A549 (cell line): ENCODE measurements at regions of chr17 and their contacts with region 1.

Region 1: GRCh38 chr17:1153795-1154546 is 25.8 kb downstream of the ABR start:
- DNase-seq: peak; percentile 51 to 55
- ATAC-seq: peak; percentile 66 to 67
- H3K4me3 ChIP-seq: no peak overlapping the region
- H3K27ac ChIP-seq: peak overlapping the region in 1 of 2 experiments; percentile 71; a peak in 3 of 6 replicates
- H3K4me1 ChIP-seq: no peaks in the 10 kb centered on the region
- CTCF ChIP-seq: no peak
- EP300 ChIP-seq: no peak
- POLR2A ChIP-seq: no peak
- RAD21 ChIP-seq: no peak

Region 2: DNA sequence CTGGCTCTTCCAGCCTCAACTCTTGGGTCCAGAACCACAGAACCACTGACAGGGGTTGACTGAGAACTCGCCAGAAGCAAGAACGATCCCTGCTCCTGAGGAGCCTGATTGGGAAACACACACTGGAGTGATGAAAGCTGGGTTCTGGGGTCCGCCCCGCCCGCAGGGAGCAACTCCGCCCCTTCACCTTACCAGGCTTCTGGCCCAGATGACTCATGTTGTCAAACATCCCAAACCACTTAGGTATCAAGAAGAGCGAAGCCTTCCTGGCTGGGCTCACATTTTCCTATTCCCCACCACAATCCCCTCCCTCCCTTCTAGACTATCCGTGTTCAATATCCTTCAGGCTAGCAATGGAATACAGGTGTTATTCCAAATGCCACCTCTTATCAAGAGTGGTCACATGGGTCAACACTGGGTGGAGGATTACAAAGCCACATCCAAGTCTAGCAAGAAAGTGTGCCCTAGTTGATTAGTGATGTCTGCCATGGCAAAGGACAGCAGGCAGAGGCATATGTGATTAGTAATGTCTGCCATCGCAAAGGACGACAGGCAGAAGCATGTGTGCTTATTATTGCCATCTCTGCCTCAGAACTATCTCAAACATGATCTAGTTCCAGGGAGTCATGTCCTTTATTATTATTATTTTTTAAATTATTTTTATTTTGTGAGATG is 86.6 kb before region 1 on chr17:
- CTCF ChIA-PET with region 1: no interaction called
- POLR2A ChIA-PET with region 1: no interaction called
- DNase-seq: peak; percentile 39 to 50
- ATAC-seq: peak; percentile 44 to 48; a peak in 3 of 6 replicates
- H3K4me3 ChIP-seq: no peak overlapping the region
- H3K27ac ChIP-seq: no peak overlapping the region
- H3K4me1 ChIP-seq: peaks cover 9% of the 10 kb centered on the region
- CTCF ChIP-seq: no peak
- EP300 ChIP-seq: no peak
- POLR2A ChIP-seq: no peak
- RAD21 ChIP-seq: no peak

Region 3: DNA sequence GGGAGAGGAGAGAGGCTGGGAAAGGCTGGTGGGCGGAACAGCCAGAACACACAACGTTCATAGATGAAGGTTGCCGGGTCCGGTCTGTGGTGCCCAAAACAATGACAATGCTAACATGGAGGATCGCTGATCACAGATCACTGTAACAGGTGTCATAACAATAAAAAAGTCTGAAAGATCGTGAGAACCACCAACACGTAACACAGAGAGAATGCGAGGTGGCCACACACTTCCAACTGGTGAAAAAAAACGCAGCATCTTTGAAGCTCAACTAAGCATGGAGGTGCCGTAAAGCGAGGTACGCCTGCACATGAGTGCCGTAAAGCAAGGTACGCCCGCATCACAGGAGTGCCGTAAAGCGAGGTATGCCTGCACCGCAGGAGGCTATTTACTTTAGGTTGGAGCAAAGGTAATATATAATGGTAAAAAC is 16.5 kb before region 1 on chr17:
- CTCF ChIA-PET with region 1: interaction called, 10 read pairs
- POLR2A ChIA-PET with region 1: interaction called, 3 read pairs
- DNase-seq: peak; percentile 79 to 94
- ATAC-seq: peak; percentile 63 to 69; a peak in 5 of 6 replicates
- H3K4me3 ChIP-seq: peak overlapping the region; percentile 42
- H3K27ac ChIP-seq: peak overlapping the region; percentile 67 to 83
- H3K4me1 ChIP-seq: no peaks in the 10 kb centered on the region
- CTCF ChIP-seq: no peak
- EP300 ChIP-seq: no peak
- POLR2A ChIP-seq: peak; percentile 58
- RAD21 ChIP-seq: no peak

Region 4: GRCh38 chr17:1736348-1737281 is 582.6 kb after region 1 on chr17:
- CTCF ChIA-PET with region 1: no interaction called
- POLR2A ChIA-PET with region 1: no interaction called
- DNase-seq: peak; percentile 66 to 67
- ATAC-seq: peak; percentile 40 to 78
- H3K4me3 ChIP-seq: no peak overlapping the region
- H3K27ac ChIP-seq: peak overlapping the region; percentile 53 to 84
- H3K4me1 ChIP-seq: peaks cover 20% of the 10 kb centered on the region
- CTCF ChIP-seq: no peak
- EP300 ChIP-seq: no peak
- POLR2A ChIP-seq: no peak
- RAD21 ChIP-seq: no peak